GM12878 (cell line): ENCODE measurements at regions of chr13 and their contacts with region 1.

Region 1: DNA sequence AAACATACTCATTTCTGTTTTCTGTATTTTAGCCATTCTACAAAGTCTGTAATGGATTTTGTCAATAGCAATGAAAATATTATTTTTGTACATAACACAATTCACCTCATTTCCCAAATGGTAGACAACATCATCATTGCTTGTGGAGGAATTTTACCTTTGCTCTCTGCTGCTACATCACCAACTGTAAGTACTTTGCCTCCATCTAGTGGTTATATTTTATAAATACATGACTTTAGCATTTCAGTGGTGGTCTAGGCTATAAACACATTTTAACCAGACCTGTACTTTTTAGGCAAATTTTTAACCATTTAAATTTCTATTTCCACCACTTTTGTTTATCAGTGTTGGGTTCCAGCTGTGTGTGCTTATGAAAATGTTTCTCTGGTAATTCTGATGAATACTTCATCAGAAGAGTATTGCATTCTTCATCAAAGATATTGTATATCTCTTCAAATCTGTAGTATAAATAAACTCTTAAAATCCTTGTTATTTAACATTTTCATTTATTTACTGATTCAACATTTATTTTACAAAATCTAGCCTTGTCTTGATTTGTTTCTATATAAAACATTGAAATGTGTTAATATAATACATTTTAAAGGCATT is 222.4 kb downstream of the NBEA start:
- DNase-seq: peak; percentile 40
- ATAC-seq: peak; percentile 88
- H3K4me3 ChIP-seq: no peak overlapping the region
- H3K27ac ChIP-seq: no peak overlapping the region
- H3K4me1 ChIP-seq: peaks cover 22% of the 10 kb centered on the region
- H3K27me3 ChIP-seq: no peaks in the 10 kb centered on the region
- CTCF ChIP-seq: peak; percentile 47 to 78 (median 51); a peak in 5 of 6 replicates
- EP300 ChIP-seq: no peak
- POLR2A ChIP-seq: no peak
- RAD21 ChIP-seq: peak; percentile 87

Region 2: DNA sequence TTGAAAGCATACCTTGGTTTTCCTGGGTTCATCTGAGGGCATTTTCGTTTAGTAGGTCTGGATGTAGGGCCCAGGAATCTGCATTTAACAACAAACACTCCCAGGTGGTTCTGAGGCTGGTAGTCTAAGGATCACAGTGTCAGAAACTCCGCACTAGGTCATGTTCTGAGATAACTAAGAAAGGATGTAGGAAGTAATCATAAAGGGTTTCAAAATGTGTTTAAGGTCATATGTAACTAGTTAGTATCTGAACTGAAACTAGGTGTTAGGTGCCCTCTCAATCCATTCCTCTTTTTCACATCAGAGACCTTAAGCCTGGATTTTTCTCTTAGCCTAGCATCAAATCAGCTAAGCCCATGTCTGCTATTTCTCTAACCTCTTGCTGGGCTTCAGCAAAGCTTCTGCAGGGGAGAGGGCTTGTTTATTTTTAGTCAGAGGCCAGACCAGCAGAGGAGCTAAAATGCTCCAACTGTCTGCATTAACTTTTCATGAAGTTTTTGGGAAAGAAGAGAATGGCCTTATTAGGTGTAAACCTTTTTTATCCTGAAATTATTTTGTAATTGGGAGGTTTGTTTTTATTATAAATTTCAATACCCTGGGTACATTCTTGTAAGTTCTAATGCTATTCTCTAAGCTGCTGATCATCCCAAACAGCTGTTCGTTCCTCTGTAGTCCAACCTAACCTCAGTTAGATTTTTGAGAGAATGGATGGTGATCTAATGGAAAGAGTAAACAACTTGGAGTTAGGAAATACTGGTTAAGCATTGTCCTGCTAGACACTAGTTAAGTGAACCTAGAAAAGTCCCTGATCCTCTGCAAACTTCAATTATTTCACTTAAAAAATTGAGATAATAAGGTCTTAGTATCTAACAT is 1609.3 kb before region 1 on chr13:
- CTCF ChIA-PET with region 1: no interaction called
- POLR2A ChIA-PET with region 1: no interaction called
- RAD21 ChIA-PET with region 1: no interaction called
- SMC1A ChIA-PET with region 1: no interaction called
- in situ Hi-C with region 1: no loop called
- intact Hi-C with region 1: loop called (anchors 5 kb)
- DNase-seq: no peak
- ATAC-seq: peak; percentile 96
- H3K4me3 ChIP-seq: no peak overlapping the region
- H3K27ac ChIP-seq: peak overlapping the region; percentile 46
- H3K4me1 ChIP-seq: peaks cover 11% of the 10 kb centered on the region; the same call in 1 of the 2 replicates
- H3K27me3 ChIP-seq: no peaks in the 10 kb centered on the region
- CTCF ChIP-seq: no peak
- EP300 ChIP-seq: peak in 1 of 2 experiments; percentile 8; a peak in 1 of 4 replicates
- POLR2A ChIP-seq: no peak
- RAD21 ChIP-seq: no peak

Region 3: GRCh38 chr13:33931397-33932311 is 1232.8 kb before region 1 on chr13:
- CTCF ChIA-PET with region 1: interaction called, 27 read pairs
- POLR2A ChIA-PET with region 1: no interaction called
- RAD21 ChIA-PET with region 1: interaction called, 9 read pairs
- SMC1A ChIA-PET with region 1: interaction called, 10 read pairs
- in situ Hi-C with region 1: loop called (anchors 5 kb)
- intact Hi-C with region 1: no loop called
- DNase-seq: peak; percentile 4
- ATAC-seq: peak; percentile 93
- H3K4me3 ChIP-seq: no peak overlapping the region
- H3K27ac ChIP-seq: no peak overlapping the region
- H3K4me1 ChIP-seq: 0 out of 2 replicates have a peak, but pooled peaks cover 3% of the 10 kb centered on the region
- H3K27me3 ChIP-seq: no peaks in the 10 kb centered on the region
- CTCF ChIP-seq: peak; percentile 44 to 61 (median 44); a peak in 5 of 6 replicates
- EP300 ChIP-seq: no peak
- POLR2A ChIP-seq: no peak
- RAD21 ChIP-seq: peak; percentile 93

Region 4: GRCh38 chr13:34941835-34942731 is 222.3 kb before region 1 on chr13 and contains the start of gene NBEA:
- CTCF ChIA-PET with region 1: no interaction called
- POLR2A ChIA-PET with region 1: no interaction called
- RAD21 ChIA-PET with region 1: no interaction called
- SMC1A ChIA-PET with region 1: no interaction called
- in situ Hi-C with region 1: no loop called
- intact Hi-C with region 1: loop called (anchors 5 kb)
- DNase-seq: peak; percentile 16
- ATAC-seq: peak; percentile 76
- H3K4me3 ChIP-seq: peak within 1 kb of the TSS; percentile 68
- H3K27ac ChIP-seq: no peak within 1 kb of the TSS
- H3K4me1 ChIP-seq: no peaks in the 10 kb centered on the region
- H3K27me3 ChIP-seq: no peaks in the 10 kb centered on the region; a peak in 1 of 4 replicates
- CTCF ChIP-seq: no peak
- EP300 ChIP-seq: no peak
- POLR2A ChIP-seq: peak; percentile 63
- RAD21 ChIP-seq: no peak
- polyA plus RNA-seq, gene NBEA: 0.23 to 0.29 TPM